Activated CD4-positive, alpha-beta T cell treated with anti-CD3 and anti-CD28 coated beads, Interleukin-2, amount 10 ng/mL, durations not matched to agents 24 days and 14 days (primary cell): ENCODE measurements at regions of chr10 and their contacts with region 1.

Region 1: DNA sequence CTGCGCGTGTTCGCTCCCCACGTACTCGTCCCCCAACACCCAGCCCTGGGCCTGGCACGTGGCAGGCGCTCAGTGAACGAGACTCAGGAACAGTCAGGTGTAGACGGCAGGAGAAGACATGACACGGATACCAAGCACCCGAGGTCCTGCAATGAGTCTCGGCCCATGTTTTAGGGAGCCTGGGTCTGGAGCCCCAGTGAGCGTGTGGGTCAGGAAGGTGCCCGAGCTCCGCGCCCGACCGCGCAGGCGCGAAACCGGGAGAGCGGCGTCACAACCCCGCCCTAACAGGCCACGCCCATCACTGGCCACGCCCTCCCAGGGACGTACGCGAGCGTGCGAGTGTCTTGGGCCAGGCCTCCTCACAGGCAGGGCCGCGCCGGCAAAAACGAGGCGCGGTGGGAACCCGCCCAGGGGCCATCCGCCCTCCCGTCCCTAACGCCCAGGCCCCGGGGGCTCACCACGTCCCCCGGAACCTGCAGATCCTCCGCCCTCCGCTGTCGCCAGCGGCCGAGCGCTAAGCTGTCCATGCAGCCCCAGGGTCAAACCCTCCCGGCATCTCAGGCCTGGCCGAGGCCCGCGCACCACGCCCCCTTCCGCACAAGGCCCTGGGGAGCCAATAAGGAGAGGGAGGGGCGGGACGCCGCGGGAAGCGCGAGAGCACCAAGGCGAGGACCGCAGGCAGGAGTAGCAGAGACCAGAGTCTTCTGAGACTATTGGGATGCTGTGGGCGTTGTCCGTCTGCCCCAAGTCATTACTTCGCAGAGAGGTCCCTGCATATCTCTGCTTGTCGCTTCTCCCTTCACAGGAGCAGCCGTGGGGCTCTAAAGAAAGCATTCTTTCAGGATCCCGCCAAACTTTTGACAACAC is at the start of gene C10orf143:
- DNase-seq: peak; percentile 100
- H3K4me3 Mint-ChIP-seq: peak within 1 kb of the TSS; percentile 89
- H3K27ac Mint-ChIP-seq: peak within 1 kb of the TSS; percentile 97
- H3K4me1 Mint-ChIP-seq: peaks cover 40% of the 10 kb centered on the region
- H3K27me3 Mint-ChIP-seq: no peaks in the 10 kb centered on the region
- total RNA-seq, gene C10orf143: 2.5 and 3.0 TPM in 2 replicates

Region 2: GRCh38 chr10:129963641-129964501 is 146.6 kb before region 1 on chr10 and contains the start of gene EBF3:
- intact Hi-C with region 1: loop called (anchors 5 kb)
- DNase-seq: peak; percentile 81
- H3K4me3 Mint-ChIP-seq: peak within 1 kb of the TSS; percentile 72
- H3K27ac Mint-ChIP-seq: peak within 1 kb of the TSS; percentile 66
- H3K4me1 Mint-ChIP-seq: peaks cover 8% of the 10 kb centered on the region
- H3K27me3 Mint-ChIP-seq: peaks cover 57% of the 10 kb centered on the region
- total RNA-seq, gene EBF3: not detected in 2 replicates

Region 3: GRCh38 chr10:130127364-130128061 is 17.0 kb after region 1 on chr10:
- intact Hi-C with region 1: loop called (anchors 1 kb)
- DNase-seq: peak; percentile 87
- H3K4me3 Mint-ChIP-seq: no peak overlapping the region
- H3K27ac Mint-ChIP-seq: peak overlapping the region; percentile 7
- H3K4me1 Mint-ChIP-seq: peaks cover 8% of the 10 kb centered on the region
- H3K27me3 Mint-ChIP-seq: peaks cover 54% of the 10 kb centered on the region

Region 4: DNA sequence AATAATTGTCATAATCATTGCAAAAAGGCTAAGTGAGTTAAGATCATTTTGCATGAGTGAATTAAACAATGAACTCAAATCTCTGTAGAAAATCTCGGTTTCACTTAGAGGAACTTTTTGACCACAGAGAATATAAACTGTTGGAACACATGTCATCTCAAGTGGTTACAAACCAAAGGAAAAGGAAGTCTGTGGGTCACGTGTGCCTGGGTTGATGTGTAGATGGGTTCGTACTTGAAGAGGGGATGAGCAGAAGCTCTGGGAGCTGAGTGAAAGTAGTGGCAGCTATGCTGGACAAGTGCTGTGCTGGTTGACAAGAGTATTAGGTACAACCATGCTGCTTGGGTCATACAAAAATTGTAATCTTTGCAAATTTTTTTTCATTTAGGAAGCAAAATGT is 60.7 kb after region 1 on chr10:
- intact Hi-C with region 1: loop called (anchors 1 kb)
- DNase-seq: peak; percentile 86
- H3K4me3 Mint-ChIP-seq: peak overlapping the region; percentile 27
- H3K27ac Mint-ChIP-seq: peak overlapping the region; percentile 2
- H3K4me1 Mint-ChIP-seq: peaks cover 29% of the 10 kb centered on the region
- H3K27me3 Mint-ChIP-seq: no peaks in the 10 kb centered on the region

Region 5: GRCh38 chr10:131900350-131901146 is 1790.1 kb after region 1 on chr10 and contains the start of gene PPP2R2D:
- intact Hi-C with region 1: loop called (anchors 10 kb)
- DNase-seq: peak; percentile 99
- H3K4me3 Mint-ChIP-seq: peak within 1 kb of the TSS; percentile 90
- H3K27ac Mint-ChIP-seq: peak within 1 kb of the TSS; percentile 79
- H3K4me1 Mint-ChIP-seq: peaks cover 47% of the 10 kb centered on the region
- H3K27me3 Mint-ChIP-seq: peaks cover 20% of the 10 kb centered on the region
- total RNA-seq, gene PPP2R2D: 33.2 and 36.2 TPM in 2 replicates